HepG2 (cell line): ENCODE measurements at regions of chr16 and their contacts with region 1.

Region 1: GRCh38 chr16:14529010-14529669 is 100.9 kb downstream of the PARN start:
- DNase-seq: peak; percentile 94
- ATAC-seq: peak; percentile 85
- H3K4me3 ChIP-seq: peak overlapping the region in 1 of 3 experiments; percentile 10; a peak in 1 of 6 replicates
- H3K27ac ChIP-seq: peak overlapping the region; percentile 48
- H3K4me1 ChIP-seq: peaks cover 53% of the 10 kb centered on the region
- H3K27me3 ChIP-seq: no peaks in the 10 kb centered on the region
- CTCF ChIP-seq: peak; percentile 98
- EP300 ChIP-seq: peak in 1 of 2 experiments; percentile 56; a peak in 2 of 4 replicates
- POLR2A ChIP-seq: no peak
- RAD21 ChIP-seq: peak; percentile 99

Region 2: GRCh38 chr16:14249291-14250032 is 279.7 kb before region 1 on chr16:
- CTCF ChIA-PET with region 1: interaction called, 27 read pairs
- POLR2A ChIA-PET with region 1: no interaction called
- in situ Hi-C with region 1: no loop called
- intact Hi-C with region 1: loop called (anchors 1 kb)
- DNase-seq: peak; percentile 53
- ATAC-seq: 0 out of 3 replicates have a peak, but pooled peaks have one; percentile 27
- H3K4me3 ChIP-seq: no peak overlapping the region
- H3K27ac ChIP-seq: no peak overlapping the region
- H3K4me1 ChIP-seq: no peaks in the 10 kb centered on the region
- H3K27me3 ChIP-seq: no peaks in the 10 kb centered on the region
- CTCF ChIP-seq: peak; percentile 87
- EP300 ChIP-seq: no peak
- POLR2A ChIP-seq: no peak
- RAD21 ChIP-seq: peak; percentile 88

Region 3: DNA sequence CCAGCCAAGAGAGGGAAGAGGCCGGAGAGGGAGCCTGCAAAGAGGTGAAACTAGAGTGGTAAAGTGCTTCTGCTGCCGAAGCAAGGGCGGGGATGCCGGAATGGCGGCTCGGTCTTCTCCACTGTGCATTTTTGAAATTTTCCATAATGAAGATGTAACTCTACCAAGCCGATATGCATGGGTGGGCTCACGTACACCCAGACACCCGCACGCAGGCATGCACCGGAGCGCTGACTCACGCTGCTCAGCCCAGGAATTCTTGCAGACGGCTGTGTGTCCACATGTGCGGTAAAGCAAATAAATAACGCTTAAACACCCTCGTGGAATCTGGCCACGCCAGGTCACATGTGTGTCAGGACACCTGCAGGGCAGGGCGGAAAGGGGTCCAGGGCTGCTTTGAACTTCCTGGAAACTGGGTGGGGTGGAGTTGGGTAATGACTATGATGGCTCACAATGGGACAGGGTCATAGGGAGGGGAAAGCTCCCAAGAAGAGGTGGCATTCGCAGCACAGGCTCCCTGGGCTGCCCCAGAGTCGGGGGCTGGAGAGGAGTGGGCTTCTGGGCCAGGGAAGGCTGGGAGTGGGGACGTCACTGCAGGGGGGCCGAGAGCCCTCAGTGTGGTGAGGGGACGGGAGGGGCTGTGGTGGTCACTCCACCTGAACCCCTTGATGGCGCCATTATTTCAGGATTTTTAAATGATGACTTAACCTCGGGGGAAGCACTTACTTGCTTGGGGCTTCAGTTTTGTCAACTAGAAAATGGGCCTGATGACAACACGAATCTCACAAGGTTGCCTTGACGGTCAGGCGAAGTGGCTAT is 164.5 kb before region 1 on chr16:
- CTCF ChIA-PET with region 1: no interaction called
- POLR2A ChIA-PET with region 1: no interaction called
- in situ Hi-C with region 1: no loop called
- intact Hi-C with region 1: loop called (anchors 2 kb)
- DNase-seq: peak; percentile 99
- ATAC-seq: peak; percentile 85
- H3K4me3 ChIP-seq: peak overlapping the region; percentile 46 to 61 (median 49)
- H3K27ac ChIP-seq: peak overlapping the region; percentile 59
- H3K4me1 ChIP-seq: peaks cover 57% of the 10 kb centered on the region
- H3K27me3 ChIP-seq: no peaks in the 10 kb centered on the region
- CTCF ChIP-seq: peak; percentile 71
- EP300 ChIP-seq: peak; percentile 94 to 97
- POLR2A ChIP-seq: no peak; a peak in 1 of 4 replicates
- RAD21 ChIP-seq: peak; percentile 46

Region 4: DNA sequence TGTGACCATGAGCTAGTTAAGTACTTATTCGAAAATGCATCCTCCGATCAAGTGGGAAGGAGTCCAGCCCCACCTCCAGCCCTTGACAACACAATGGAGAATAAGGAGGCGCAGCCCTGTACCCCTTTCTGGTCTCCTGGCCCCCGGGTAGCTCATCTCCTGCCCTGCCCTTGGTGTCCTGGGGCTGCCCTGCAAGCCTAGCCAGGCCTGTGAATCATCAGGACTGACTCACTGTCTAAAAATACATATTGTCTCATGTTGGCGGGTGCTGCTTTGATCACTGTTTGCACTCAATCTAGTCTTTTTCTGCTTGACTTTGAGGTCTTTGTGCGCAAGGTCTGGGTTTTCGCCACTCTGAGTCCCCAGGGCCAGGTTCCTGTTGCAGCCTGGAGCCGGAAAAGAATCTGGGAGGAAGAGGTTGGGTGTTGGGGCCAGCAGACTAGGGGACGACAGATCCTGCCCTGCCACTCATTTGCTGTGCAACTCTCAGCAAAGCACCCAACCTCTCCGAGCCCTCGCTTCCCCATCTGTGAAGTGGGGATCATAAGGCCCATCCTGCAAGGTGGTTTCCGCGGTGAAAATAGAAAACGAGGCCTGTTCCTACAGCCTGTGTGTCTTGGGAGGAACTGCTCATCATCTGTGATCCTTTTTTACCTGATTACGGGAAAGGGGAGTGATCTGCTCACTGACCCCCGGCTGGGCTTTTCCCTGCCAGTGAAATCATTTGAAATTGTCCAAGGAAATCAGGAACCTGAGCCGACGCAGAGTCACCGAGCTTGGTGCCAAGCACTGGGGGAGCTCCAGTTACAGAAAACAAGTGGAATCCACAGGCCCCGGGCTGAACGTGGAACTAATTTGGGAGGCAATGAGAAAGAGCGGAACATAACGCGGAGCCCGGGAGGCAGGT is 129.5 kb before region 1 on chr16:
- CTCF ChIA-PET with region 1: no interaction called
- POLR2A ChIA-PET with region 1: interaction called, 3 read pairs
- in situ Hi-C with region 1: no loop called
- intact Hi-C with region 1: loop called (anchors 2 kb)
- DNase-seq: peak; percentile 99
- ATAC-seq: peak; percentile 88
- H3K4me3 ChIP-seq: peak overlapping the region; percentile 31 to 67 (median 47)
- H3K27ac ChIP-seq: peak overlapping the region; percentile 95
- H3K4me1 ChIP-seq: peaks cover 96% of the 10 kb centered on the region
- H3K27me3 ChIP-seq: no peaks in the 10 kb centered on the region
- CTCF ChIP-seq: 0 out of 2 replicates have a peak, but pooled peaks have one; percentile 28
- EP300 ChIP-seq: peak; percentile 90 to 96
- POLR2A ChIP-seq: peak; percentile 82 to 84
- RAD21 ChIP-seq: no peak

Region 5: DNA sequence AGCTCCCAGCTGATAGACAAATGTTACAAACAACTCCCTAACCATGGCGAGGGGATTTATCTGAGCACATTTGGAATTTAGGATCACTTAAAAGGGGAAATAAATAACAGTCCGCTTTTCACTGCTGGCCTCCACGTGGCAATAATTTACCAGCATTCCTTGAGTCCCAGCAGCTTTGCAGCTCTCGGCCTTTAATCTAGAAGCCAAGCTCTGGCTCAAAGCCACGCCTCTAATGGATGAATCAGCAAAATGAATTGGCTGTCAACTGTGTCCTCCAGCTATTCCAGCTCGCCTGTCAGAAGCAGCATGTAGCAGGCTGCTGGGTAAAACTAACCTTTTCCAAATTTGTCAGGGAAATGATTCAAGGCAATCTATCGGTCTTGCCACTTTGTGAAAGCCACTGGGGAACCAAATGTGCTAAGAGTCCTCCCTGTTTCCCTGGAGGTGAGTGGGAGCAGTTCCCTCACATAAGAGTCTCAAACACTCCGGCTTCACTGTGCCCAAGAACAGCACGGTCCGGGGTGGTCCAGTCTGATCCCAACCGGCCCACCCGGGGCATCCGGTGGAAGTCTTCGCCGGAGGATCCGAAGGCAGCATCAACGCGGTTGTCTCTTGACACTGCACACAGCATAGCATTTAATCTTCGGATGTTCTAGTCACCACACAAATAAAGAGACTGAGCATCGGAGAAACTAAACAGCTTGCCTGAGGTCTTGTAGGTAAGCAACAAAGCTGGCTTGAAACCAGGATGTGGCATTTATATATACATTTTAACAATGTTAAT is 42.4 kb before region 1 on chr16:
- CTCF ChIA-PET with region 1: no interaction called
- POLR2A ChIA-PET with region 1: interaction called, 4 read pairs
- in situ Hi-C with region 1: no loop called
- intact Hi-C with region 1: loop called (anchors 1 kb)
- DNase-seq: peak; percentile 98
- ATAC-seq: peak; percentile 95
- H3K4me3 ChIP-seq: peak overlapping the region; percentile 44 to 62 (median 49)
- H3K27ac ChIP-seq: peak overlapping the region; percentile 78
- H3K4me1 ChIP-seq: peaks cover 71% of the 10 kb centered on the region
- H3K27me3 ChIP-seq: no peaks in the 10 kb centered on the region
- CTCF ChIP-seq: peak; percentile 30; the same call in 1 of the 2 replicates
- EP300 ChIP-seq: peak in 1 of 2 experiments; percentile 74; a peak in 1 of 4 replicates
- POLR2A ChIP-seq: peak; percentile 58 to 87; a peak in 3 of 4 replicates
- RAD21 ChIP-seq: no peak; the same call in 1 of the 2 replicates